ENCODE measurements at regions of chr13 and their contacts with region 1.

Region 1: GRCh38 chr13:74287724-74288169 is 153.5 kb upstream of the KLF12 start:
- DNase-seq: peak; percentile 90 to 95
- H3K4me3 ChIP-seq: peak overlapping the region; percentile 19 to 35 (median 23)
- H3K27ac ChIP-seq: peak overlapping the region in 4 of 5 donors; percentile 38 to 63 (median 59)
- H3K4me1 ChIP-seq: peaks cover 21 to 42% (median 36%) of the 10 kb centered on the region in 4 donors
- H3K27me3 ChIP-seq: no peaks in the 10 kb centered on the region
- CTCF ChIP-seq: no peak
- EP300 ChIP-seq: no peak
- POLR2A ChIP-seq: no peak

Region 2: DNA sequence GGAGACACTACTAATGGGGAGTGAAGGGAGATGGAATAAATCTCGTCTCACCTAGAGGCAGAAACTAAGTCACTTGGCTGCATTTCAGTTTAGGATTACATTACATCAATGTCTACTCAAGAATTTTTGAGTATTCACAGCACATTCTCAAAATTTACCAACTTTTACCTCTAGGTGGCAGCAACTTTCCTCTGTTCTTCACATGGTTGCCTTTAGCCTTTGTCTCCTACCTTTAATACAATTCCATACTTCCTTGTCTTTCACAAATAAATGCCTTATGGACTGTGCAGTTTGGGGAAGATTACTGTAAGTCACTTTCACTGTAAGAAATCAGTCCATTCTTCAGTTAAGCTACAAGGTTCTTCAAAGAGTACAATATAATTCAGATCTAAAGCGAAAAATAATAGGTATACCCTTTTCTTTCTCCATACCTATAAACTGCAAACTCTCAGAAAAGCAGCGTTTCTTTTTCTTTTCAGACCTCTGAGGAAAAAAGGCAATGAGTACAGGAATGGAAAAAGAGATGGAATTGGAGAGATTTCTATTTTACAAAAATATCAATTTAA is 532.9 kb before region 1 on chr13:
- intact Hi-C with region 1: loop called (anchors 10 kb)
- DNase-seq: peak in 1 of 2 donors; percentile 87
- H3K4me3 ChIP-seq: no peak overlapping the region
- H3K27ac ChIP-seq: no peak overlapping the region
- H3K4me1 ChIP-seq: peaks cover 0 to 15% (median 4%) of the 10 kb centered on the region in 4 donors
- H3K27me3 ChIP-seq: no peaks in the 10 kb centered on the region
- CTCF ChIP-seq: peak in 5 of 7 experiments; percentile 39 to 64 (median 61)
- EP300 ChIP-seq: no peak
- POLR2A ChIP-seq: no peak

Region 3: GRCh38 chr13:73835138-73835721 is 452.5 kb before region 1 on chr13:
- intact Hi-C with region 1: loop called (anchors 10 kb)
- DNase-seq: peak in 1 of 2 donors; percentile 64
- H3K4me3 ChIP-seq: no peak overlapping the region
- H3K27ac ChIP-seq: no peak overlapping the region
- H3K4me1 ChIP-seq: peaks cover 0 to 18% (median 9%) of the 10 kb centered on the region in 4 donors
- H3K27me3 ChIP-seq: no peaks in the 10 kb centered on the region
- CTCF ChIP-seq: peak in 4 of 7 experiments; percentile 60 to 78 (median 70)
- EP300 ChIP-seq: no peak
- POLR2A ChIP-seq: no peak